ENCODE measurements at regions of chr11 and their contacts with region 1.

Region 1: GRCh38 chr11:65726660-65727059 is 6.1 kb upstream of the RNASEH2C start:
- DNase-seq: no peak
- ATAC-seq: peak; percentile 77
- H3K4me3 Mint-ChIP-seq: no peak overlapping the region
- H3K27ac Mint-ChIP-seq: no peak overlapping the region
- H3K4me1 Mint-ChIP-seq: no peaks in the 10 kb centered on the region
- H3K27me3 Mint-ChIP-seq: peaks cover 18% of the 10 kb centered on the region
- CTCF ChIP-seq: no peak; the same call in 1 of the 2 replicates

Region 2: GRCh38 chr11:65040847-65041621 is 685.6 kb before region 1 on chr11 and contains the start of gene SAC3D1:
- CTCF ChIA-PET with region 1: no interaction called
- POLR2A ChIA-PET with region 1: no interaction called
- DNase-seq: peak; percentile 92
- ATAC-seq: peak; percentile 90
- H3K4me3 Mint-ChIP-seq: peak within 1 kb of the TSS; percentile 90
- H3K27ac Mint-ChIP-seq: peak within 1 kb of the TSS; percentile 96
- H3K4me1 Mint-ChIP-seq: peaks cover 9% of the 10 kb centered on the region
- H3K27me3 Mint-ChIP-seq: no peaks in the 10 kb centered on the region
- CTCF ChIP-seq: no peak
- total RNA-seq, gene SAC3D1: 22.2 to 26.2 TPM (median 22.8 TPM) in 3 replicates

Region 3: DNA sequence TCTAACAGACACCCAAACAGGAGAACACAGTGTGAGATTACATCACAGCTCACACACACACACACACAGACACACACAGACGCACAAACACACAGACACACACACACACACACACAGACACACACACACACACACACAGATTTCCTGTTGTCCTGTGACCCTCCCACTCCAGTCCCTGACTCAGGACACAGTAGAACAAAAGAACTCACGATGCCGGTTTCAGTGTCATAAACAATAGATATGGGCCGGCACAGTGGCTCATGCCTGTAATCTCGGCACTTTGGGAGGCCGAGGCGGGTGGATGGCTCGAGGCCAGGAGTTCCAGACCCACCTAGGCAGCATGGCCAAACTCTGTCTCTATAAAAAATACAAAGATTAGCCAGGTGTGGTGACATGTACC is 28.5 kb before region 1 on chr11:
- CTCF ChIA-PET with region 1: interaction called, 11 read pairs
- POLR2A ChIA-PET with region 1: no interaction called
- DNase-seq: no peak
- ATAC-seq: no peak
- H3K4me3 Mint-ChIP-seq: no peak overlapping the region
- H3K27ac Mint-ChIP-seq: no peak overlapping the region
- H3K4me1 Mint-ChIP-seq: no peaks in the 10 kb centered on the region; the same call in 1 of the 2 replicates
- H3K27me3 Mint-ChIP-seq: peaks cover 14% of the 10 kb centered on the region
- CTCF ChIP-seq: no peak

Region 4: DNA sequence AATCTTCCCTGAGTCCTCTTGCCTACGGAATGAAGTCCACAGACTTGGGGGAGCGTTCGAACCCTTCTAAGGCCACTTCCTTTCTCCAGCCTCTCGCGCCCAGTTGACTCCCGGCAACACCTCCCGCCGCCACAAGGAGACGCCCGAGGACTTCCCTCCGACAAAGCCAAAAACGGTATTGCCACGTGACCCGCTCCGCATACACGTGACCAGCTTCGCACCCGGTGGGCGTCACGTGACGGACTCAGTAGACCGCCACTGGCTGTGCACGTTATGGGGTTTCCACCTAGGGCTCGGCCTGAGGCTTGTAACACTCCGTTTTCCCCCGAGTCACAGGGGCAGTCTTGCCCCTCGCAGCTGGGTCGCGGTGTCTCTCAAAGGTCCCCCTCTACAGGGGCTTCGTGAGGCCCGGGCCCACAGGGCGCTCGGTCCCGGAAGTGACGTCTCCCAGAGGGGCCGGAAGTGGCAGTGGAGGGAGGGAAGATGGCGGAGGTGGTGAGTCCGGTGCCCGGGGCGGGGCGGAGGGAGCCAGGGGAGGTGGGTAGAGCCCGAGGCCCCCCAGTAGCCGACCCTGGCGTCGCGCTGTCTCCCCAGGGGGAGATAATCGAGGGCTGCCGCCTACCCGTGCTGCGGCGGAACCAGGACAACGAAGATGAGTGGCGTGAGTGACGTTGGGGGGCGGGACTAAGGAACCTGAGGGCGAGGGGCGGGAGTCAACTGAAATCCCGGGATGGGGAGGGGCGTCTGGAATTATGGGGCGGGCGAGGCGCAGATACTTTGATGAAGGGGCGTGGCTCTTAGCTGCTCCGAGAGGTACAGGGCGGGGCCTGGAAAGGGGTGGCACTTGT is 14.7 kb before region 1 on chr11 and contains the start of gene KAT5:
- CTCF ChIA-PET with region 1: interaction called, 13 read pairs
- POLR2A ChIA-PET with region 1: no interaction called
- DNase-seq: peak; percentile 99
- ATAC-seq: peak; percentile 93
- H3K4me3 Mint-ChIP-seq: peak within 1 kb of the TSS; percentile 82
- H3K27ac Mint-ChIP-seq: peak within 1 kb of the TSS; percentile 96
- H3K4me1 Mint-ChIP-seq: 0 out of 2 replicates have a peak, but pooled peaks cover 3% of the 10 kb centered on the region
- H3K27me3 Mint-ChIP-seq: peaks cover 6% of the 10 kb centered on the region
- CTCF ChIP-seq: peak; percentile 86
- total RNA-seq, gene KAT5: 44.9 to 56.6 TPM (median 46.0 TPM) in 3 replicates

Measured in WTC11 (cell line).